ENCODE measurements at regions of chr2 and their contacts with region 1.

Region 1: DNA sequence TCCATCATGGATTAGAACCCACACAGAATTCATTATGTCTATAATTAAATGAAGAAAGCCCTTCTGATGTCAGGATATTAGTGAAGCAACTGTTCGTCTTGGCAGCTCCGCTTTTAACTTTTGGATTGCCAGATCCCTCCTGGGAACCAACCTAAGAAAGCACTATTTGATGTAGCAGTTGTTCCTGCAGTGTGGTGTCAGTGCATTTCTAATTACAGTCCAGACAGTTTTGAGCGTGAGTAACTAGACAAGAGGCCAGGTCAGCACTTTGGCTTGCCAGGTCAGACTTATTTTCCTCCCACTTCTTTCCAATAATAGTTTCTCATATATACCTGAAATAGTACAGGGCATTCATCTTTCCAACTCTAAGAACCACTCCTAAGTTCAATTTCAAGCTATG is 13.8 kb downstream of the NRXN1 start:
- DNase-seq: no peak
- H3K4me3 ChIP-seq: no peak overlapping the region
- H3K27ac ChIP-seq: no peak overlapping the region
- H3K4me1 ChIP-seq: peaks cover 0 to 12% (median 2%) of the 10 kb centered on the region in 4 experiments; a peak in 6 of 7 replicates
- H3K27me3 ChIP-seq: peaks cover 0 to 1% (median 0%) of the 10 kb centered on the region in 4 experiments; a peak in 2 of 7 replicates
- CTCF ChIP-seq: no peak
- EP300 ChIP-seq: no peak
- POLR2A ChIP-seq: no peak
- RAD21 ChIP-seq: no peak

Region 2: GRCh38 chr2:51028829-51029228 is 10.7 kb after region 1 on chr2:
- CTCF ChIA-PET with region 1: interaction called, 8 read pairs
- POLR2A ChIA-PET with region 1: interaction called, 15 read pairs
- DNase-seq: no peak
- H3K4me3 ChIP-seq: no peak overlapping the region
- H3K27ac ChIP-seq: no peak overlapping the region
- H3K4me1 ChIP-seq: peaks cover 0 to 11% (median 6%) of the 10 kb centered on the region in 4 experiments; a peak in 3 of 7 replicates
- H3K27me3 ChIP-seq: no peaks in the 10 kb centered on the region
- CTCF ChIP-seq: no peak
- EP300 ChIP-seq: no peak
- POLR2A ChIP-seq: no peak
- RAD21 ChIP-seq: no peak

Region 3: DNA sequence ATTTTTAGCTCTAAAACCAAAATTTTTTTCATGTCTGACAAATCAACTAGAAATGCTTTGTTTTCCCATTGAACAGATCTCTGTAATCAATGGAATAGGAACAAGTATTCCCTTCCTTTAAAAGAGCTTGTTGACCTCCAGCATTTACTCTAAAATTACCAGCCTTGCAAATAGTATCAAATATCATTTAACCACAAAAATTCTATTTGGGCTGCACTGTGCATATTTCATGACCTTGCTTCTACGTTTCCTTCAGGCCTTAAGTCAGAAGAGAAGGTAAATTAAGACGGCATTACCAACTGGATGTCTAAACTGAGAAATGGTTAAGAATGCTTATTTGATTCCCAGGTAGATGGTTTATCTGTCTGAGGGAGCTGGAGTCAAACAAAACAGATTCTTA is 47.1 kb after region 1 on chr2:
- CTCF ChIA-PET with region 1: no interaction called
- POLR2A ChIA-PET with region 1: no interaction called
- DNase-seq: no peak
- H3K4me3 ChIP-seq: no peak overlapping the region
- H3K27ac ChIP-seq: no peak overlapping the region
- H3K4me1 ChIP-seq: peaks cover 0 to 2% (median 0%) of the 10 kb centered on the region in 4 experiments; a peak in 1 of 7 replicates
- H3K27me3 ChIP-seq: no peaks in the 10 kb centered on the region
- CTCF ChIP-seq: no peak
- EP300 ChIP-seq: no peak
- POLR2A ChIP-seq: no peak
- RAD21 ChIP-seq: no peak